AG04450 (cell line): ENCODE measurements at regions of chr10 and their contacts with region 1.

Region 1: DNA sequence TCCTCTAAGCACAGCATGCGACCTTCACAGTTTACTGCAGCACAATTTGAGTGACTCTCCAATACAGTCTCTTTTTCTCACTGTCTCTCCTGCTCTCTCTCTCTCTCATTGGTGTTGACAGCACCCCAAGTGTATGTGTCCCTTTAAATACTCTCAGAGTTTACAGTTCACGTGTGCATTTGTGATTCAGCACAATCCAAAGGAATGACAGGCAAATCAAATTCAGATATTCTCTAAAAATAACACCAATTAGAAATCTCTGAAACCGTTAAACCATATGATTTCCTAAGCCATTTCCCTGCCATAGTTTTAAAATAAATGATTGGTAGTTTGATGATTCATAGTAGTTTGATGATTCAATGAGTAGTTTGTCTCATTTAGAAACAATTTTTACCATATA is 104.0 kb upstream of the GAD2 start:
- DNase-seq: no peak
- H3K4me3 ChIP-seq: no peak overlapping the region
- H3K27ac ChIP-seq: no peak overlapping the region
- H3K27me3 ChIP-seq: no peaks in the 10 kb centered on the region
- CTCF ChIP-seq: no peak

Region 2: DNA sequence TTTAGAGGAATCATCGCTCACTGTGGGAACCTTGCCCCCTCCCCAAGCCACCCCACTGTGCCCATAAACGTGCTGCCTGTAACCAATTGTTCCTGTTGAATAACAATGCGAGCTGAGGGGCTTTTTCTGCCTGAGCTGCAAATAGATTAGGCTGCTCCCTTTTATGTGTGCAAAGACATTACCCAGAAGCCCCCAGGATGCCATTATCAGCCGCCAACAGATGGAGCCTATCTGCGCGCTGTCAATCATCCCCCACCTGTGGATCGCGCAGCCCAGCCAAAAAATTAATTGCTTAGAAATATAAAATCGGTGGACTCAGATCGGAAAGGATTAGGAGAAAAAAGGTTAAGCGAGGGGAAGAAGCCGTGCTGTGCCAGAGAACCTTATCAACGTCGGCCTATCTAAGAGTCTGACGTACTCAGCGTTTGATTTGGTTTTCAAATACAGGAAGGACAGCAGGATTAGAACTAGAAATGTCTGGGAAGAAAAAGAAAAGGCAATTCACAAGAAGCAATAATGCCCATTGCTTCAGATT is 345.8 kb before region 1 on chr10:
- CTCF ChIA-PET with region 1: interaction called, 14 read pairs
- POLR2A ChIA-PET with region 1: no interaction called
- DNase-seq: no peak
- H3K4me3 ChIP-seq: no peak overlapping the region
- H3K27ac ChIP-seq: no peak overlapping the region
- H3K27me3 ChIP-seq: no peaks in the 10 kb centered on the region
- CTCF ChIP-seq: no peak

Region 3: DNA sequence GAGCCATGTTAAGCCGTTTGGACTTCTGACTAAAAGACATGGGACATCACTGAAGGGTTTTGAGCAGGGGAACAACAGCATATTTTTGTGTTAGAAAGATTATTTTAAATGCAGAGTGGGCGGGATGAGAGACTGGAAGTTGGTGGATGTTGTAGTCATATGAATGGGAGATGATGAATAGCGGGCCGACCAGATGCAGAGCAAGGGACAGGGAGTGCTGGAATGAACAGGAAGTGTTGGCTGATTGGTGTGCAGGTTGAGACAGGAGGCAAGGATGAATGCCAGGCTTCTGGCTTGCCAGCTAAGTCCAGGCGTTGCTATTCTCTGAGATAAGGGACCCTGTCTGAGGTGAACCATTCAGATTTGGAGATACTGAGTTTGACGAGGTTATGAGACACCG is 142.1 kb after region 1 on chr10:
- CTCF ChIA-PET with region 1: no interaction called
- POLR2A ChIA-PET with region 1: no interaction called
- DNase-seq: no peak
- H3K4me3 ChIP-seq: no peak overlapping the region
- H3K27ac ChIP-seq: no peak overlapping the region
- H3K27me3 ChIP-seq: no peaks in the 10 kb centered on the region
- CTCF ChIP-seq: no peak